K562 (cell line): ENCODE measurements at regions of chr5 and their contacts with region 1.

Region 1: DNA sequence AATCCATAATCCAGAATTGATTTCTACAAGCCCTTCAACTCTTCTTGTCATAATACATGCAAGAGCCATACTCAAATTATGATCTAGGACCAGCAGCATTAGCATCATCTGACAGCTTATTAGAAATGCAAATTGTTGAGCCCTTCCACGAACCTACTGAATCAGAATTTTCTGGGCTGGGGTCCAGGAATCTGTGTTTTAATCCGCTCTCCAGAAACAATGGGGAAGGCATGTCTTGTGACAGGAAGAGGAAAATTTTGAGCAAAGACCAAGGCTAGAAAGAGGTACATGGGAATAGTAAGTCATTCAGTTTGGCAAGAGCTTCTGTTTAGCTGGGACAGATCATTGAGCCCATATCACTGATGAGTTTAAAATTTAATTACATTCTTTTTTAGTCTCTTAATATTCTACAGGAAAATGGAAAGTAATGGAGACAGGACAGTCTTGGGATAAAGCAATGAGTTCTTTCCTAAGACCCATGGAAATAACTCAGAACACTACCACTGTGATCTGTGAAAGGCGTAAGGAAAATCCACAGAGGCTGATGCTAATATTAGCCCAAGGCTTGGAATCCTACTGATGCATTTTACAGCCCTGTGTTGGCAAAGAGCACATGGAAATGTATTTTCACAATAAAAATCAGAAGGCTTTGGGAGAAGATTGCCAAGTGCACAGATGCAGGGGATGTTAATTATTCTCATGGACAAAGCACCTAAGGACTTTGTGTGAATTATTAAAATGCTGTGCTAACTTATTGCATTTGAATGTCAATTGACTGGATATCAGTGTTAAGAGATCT is 73.7 kb upstream of the STK32A start:
- DNase-seq: no peak
- ATAC-seq: no peak
- H3K4me3 ChIP-seq: no peak overlapping the region
- H3K27ac ChIP-seq: no peak overlapping the region
- H3K4me1 ChIP-seq: no peaks in the 10 kb centered on the region
- H3K27me3 ChIP-seq: no peaks in the 10 kb centered on the region
- CTCF ChIP-seq: no peak
- EP300 ChIP-seq: no peak
- POLR2A ChIP-seq: no peak
- RAD21 ChIP-seq: no peak

Region 2: DNA sequence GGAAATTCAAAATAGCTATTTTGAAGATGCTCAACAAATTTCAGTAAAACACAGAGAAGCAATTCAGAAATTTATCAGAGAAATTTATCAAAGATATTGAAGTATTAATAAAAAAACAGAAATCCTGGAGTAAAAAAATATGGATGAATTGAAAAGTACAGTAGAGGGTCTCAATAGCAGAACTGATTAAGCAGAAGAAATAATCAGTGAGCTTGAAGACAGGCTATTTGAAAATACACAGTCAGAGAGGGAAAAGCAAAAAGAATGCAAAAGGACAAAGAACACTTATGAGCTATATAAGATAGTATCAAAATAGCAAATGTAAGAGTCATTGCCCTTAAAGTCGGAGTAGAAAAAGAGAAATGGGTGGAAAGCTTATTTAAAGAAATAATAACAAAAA is 174.6 kb before region 1 on chr5:
- CTCF ChIA-PET with region 1: no interaction called
- POLR2A ChIA-PET with region 1: no interaction called
- in situ Hi-C with region 1: no loop called
- intact Hi-C with region 1: no loop called
- DNase-seq: no peak
- ATAC-seq: no peak
- H3K4me3 ChIP-seq: no peak overlapping the region
- H3K27ac ChIP-seq: no peak overlapping the region
- H3K4me1 ChIP-seq: no peaks in the 10 kb centered on the region
- H3K27me3 ChIP-seq: no peaks in the 10 kb centered on the region
- CTCF ChIP-seq: no peak
- EP300 ChIP-seq: no peak
- POLR2A ChIP-seq: no peak
- RAD21 ChIP-seq: no peak

Region 3: GRCh38 chr5:147075207-147075606 is 85.9 kb before region 1 on chr5:
- CTCF ChIA-PET with region 1: no interaction called
- POLR2A ChIA-PET with region 1: no interaction called
- in situ Hi-C with region 1: loop called (anchors 5 kb)
- intact Hi-C with region 1: no loop called
- DNase-seq: no peak
- ATAC-seq: no peak
- H3K4me3 ChIP-seq: no peak overlapping the region
- H3K27ac ChIP-seq: no peak overlapping the region
- H3K4me1 ChIP-seq: no peaks in the 10 kb centered on the region
- H3K27me3 ChIP-seq: no peaks in the 10 kb centered on the region
- CTCF ChIP-seq: no peak
- EP300 ChIP-seq: no peak
- POLR2A ChIP-seq: no peak
- RAD21 ChIP-seq: no peak